PC-3 (cell line): ENCODE measurements at regions of chr6 and their contacts with region 1.

Region 1: DNA sequence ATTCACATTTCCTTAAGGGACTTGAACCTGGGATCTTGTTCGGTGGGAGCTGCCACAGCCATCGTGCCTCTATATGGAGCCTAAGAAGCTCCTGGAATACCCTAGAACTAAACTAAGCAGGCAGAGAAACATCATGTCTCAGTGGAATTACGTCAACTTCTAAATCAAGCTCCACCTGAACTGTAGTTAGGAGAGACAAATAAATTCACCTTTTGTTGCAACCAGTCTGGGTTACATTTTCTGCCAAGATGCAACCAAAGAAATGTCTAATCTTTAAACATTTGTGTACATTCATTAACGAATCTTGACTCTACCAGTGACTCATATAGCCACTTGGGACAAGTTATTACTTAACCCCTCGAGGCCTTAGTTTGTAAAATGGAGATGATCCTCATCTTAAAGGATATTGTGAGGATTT is 8.9 kb downstream of the PTPRK start:
- DNase-seq: peak; percentile 88
- ATAC-seq: peak; percentile 10
- H3K4me3 ChIP-seq: peak overlapping the region; percentile 51
- H3K27ac ChIP-seq: peak overlapping the region; percentile 99
- H3K4me1 ChIP-seq: peaks cover 91% of the 10 kb centered on the region
- H3K27me3 ChIP-seq: no peaks in the 10 kb centered on the region
- CTCF ChIP-seq: no peak

Region 2: DNA sequence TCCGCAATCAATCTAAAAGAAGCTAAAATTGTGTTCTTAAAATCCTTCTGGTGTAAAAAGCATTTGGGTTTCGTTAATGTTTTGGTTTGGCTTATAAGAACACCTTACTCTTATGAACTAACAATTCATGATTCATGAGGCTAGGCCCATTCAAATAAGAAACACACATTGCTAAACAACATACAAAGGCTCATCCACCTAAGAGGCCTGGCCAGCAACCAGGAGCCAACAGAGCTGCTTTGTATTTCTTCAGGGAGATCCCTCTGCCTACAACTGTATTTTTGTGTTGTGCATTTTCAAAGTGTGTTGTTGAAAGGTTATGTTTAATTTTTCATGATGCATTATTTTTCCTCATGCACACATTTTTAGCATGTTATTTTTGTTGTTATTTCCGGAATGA is 89.7 kb before region 1 on chr6:
- CTCF ChIA-PET with region 1: no interaction called
- POLR2A ChIA-PET with region 1: no interaction called
- intact Hi-C with region 1: no loop called
- DNase-seq: no peak
- ATAC-seq: no peak
- H3K4me3 ChIP-seq: no peak overlapping the region
- H3K27ac ChIP-seq: no peak overlapping the region
- H3K4me1 ChIP-seq: no peaks in the 10 kb centered on the region
- H3K27me3 ChIP-seq: no peaks in the 10 kb centered on the region
- CTCF ChIP-seq: no peak

Region 3: DNA sequence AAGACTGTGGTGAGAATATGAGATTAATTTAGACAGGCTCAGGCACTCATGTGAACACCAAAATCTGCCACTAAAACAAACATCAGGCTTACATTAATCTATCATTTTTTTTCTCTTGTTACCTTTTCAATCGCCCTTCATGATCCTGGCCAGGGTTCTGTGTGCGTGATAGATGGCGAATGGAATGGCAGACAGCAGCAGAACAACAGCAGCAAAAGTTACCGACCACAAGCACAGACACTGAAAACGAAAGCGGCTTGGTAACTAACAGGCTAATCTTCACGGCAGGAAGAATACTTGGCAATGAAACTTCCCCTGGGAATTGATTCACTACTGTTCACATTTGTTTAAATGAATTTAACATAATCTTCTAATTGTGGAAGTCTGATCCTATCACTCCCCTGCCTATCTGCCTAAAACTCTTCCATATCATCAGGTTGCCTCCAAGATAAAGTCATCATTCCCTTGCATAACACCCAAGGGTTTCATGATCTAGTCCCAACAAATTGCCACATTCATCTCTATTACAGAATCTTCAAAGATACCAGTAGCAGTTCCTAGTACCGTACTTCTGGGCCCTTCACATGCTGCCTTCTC is 19.8 kb before region 1 on chr6:
- CTCF ChIA-PET with region 1: interaction called, 9 read pairs
- POLR2A ChIA-PET with region 1: interaction called, 4 read pairs
- intact Hi-C with region 1: loop called (anchors 1 kb)
- DNase-seq: peak; percentile 37
- ATAC-seq: peak; percentile 36
- H3K4me3 ChIP-seq: peak overlapping the region; percentile 64
- H3K27ac ChIP-seq: peak overlapping the region; percentile 94
- H3K4me1 ChIP-seq: peaks cover 47% of the 10 kb centered on the region
- H3K27me3 ChIP-seq: no peaks in the 10 kb centered on the region
- CTCF ChIP-seq: no peak

Region 4: GRCh38 chr6:128500014-128500413 is 11.5 kb before region 1 on chr6:
- CTCF ChIA-PET with region 1: no interaction called
- POLR2A ChIA-PET with region 1: no interaction called
- intact Hi-C with region 1: loop called (anchors 1 kb)
- DNase-seq: peak; percentile 46
- ATAC-seq: peak; percentile 39
- H3K4me3 ChIP-seq: peak overlapping the region; percentile 39; the same call in 1 of the 2 replicates
- H3K27ac ChIP-seq: peak overlapping the region; percentile 98
- H3K4me1 ChIP-seq: peaks cover 65% of the 10 kb centered on the region
- H3K27me3 ChIP-seq: no peaks in the 10 kb centered on the region
- CTCF ChIP-seq: no peak